ENCODE measurements at regions of chr5 and their contacts with region 1.

Region 1: DNA sequence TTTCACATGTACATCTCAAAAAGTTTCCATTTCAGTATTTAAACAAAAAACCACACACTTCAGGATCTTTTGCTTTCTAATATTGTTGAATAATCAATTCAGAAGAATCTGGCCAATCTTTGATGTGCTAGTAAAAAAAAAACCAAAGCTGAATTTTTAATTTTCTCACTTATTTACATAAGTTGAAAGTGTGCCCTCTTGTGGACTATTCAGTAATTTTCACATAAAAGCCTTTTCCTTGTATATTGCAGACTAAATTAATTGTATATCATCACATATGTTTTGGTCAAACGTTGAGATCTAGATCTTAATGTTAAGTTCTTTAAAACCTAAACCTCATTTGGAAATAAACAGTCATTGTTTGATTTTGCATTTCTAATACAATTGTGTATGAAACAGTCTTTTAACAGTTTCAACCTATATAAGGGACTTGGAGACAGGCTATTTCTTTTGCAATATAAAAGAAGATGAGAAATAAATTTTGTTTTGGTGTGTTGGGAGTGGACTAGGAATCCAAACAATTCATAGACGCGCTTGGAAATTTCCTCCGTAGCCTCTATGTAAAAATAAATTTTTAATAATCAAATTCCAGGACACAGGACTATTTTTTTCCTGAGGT is 68.1 kb downstream of the NIPBL start:
- DNase-seq: peak; percentile 85
- ATAC-seq: no peak
- H3K4me3 ChIP-seq: no peak overlapping the region
- H3K27ac ChIP-seq: no peak overlapping the region
- H3K4me1 ChIP-seq: peaks cover 39% of the 10 kb centered on the region
- H3K27me3 ChIP-seq: no peaks in the 10 kb centered on the region
- CTCF ChIP-seq: peak; percentile 79

Region 2: DNA sequence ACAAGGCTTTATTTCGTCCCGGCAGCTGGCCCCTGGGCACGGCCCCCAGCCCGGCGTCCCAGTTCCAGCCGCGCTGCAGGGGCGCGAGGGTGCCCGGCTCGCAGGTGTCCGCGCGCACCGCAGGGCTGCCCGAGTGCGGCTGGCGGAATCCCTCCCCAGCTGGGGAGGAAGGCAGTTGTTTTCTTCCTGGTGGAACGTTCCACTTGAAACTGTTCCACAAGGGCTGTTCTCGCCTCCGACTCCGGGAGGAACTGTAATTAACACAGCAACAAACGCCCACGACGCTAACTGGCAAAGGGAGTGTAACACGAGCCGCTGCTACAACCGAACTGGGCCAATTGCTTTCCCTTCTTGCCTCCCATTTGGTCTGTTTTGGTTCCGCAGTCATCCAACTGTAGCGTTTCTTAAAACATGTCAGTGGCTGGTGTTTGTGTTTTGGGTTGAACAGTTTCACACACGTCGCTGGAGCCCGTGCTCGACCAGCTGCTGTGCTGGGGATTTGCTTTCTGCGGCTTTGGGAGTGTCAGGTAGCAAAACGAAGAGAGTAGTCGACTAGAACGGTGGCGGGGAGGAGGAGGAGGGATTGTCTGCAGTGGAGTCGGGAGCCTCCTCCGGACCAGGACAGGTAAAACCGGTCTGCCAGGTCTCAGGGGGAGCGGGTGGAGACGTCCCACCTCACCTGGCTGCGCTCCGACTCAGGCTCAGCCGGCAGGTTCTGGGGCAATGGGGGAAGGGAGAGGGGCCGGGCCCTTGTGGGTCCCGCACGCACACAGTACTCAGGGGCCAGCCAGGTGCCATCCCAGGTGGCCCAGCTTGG is 199.7 kb before region 1 on chr5:
- CTCF ChIA-PET with region 1: no interaction called
- POLR2A ChIA-PET with region 1: interaction called, 3 read pairs
- intact Hi-C with region 1: loop called (anchors 2 kb)
- DNase-seq: peak; percentile 94
- ATAC-seq: peak; percentile 62
- H3K4me3 ChIP-seq: peak overlapping the region; percentile 90
- H3K27ac ChIP-seq: peak overlapping the region; percentile 59
- H3K4me1 ChIP-seq: peaks cover 18% of the 10 kb centered on the region
- H3K27me3 ChIP-seq: peaks cover 16% of the 10 kb centered on the region
- CTCF ChIP-seq: peak; percentile 77; the same call in 1 of the 2 replicates

Region 3: DNA sequence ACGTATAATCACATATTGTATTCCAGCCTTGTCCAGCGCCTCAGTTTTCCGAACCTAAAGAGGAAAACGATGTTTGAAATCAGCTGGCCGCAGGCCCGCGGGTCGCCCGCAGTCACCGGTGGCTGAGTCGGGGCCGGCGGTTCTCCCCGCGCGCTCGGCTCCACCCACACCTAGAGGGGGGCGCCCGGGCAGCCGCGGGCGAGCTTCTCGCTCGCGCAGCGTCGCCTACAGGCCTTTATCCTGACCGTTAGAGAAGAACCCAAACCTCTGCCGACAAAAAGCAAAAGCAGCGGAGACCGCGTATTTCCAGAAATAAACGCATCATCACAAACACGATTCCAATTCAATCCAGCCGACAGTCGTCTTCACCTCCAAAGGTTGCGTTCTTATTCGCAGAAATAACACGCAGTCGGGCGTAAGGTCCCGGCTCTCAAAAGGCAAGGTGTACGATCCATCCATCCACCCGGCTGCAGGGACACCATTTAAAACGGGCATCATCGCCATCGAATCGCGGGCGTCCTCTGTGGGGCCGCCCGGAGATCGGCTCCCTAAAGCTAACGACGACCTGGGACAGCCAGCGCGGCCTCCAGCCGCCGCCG is 68.8 kb before region 1 on chr5:
- CTCF ChIA-PET with region 1: no interaction called
- POLR2A ChIA-PET with region 1: no interaction called
- intact Hi-C with region 1: loop called (anchors 1 kb)
- DNase-seq: peak; percentile 81
- ATAC-seq: peak; percentile 67
- H3K4me3 ChIP-seq: peak overlapping the region; percentile 87
- H3K27ac ChIP-seq: peak overlapping the region; percentile 67
- H3K4me1 ChIP-seq: peaks cover 37% of the 10 kb centered on the region
- H3K27me3 ChIP-seq: no peaks in the 10 kb centered on the region
- CTCF ChIP-seq: peak; percentile 60

Region 4: GRCh38 chr5:36928947-36929346 is 15.8 kb before region 1 on chr5:
- CTCF ChIA-PET with region 1: no interaction called
- POLR2A ChIA-PET with region 1: no interaction called
- intact Hi-C with region 1: loop called (anchors 1 kb)
- DNase-seq: peak; percentile 95
- ATAC-seq: peak; percentile 96
- H3K4me3 ChIP-seq: no peak overlapping the region
- H3K27ac ChIP-seq: peak overlapping the region; percentile 80
- H3K4me1 ChIP-seq: peaks cover 47% of the 10 kb centered on the region
- H3K27me3 ChIP-seq: no peaks in the 10 kb centered on the region
- CTCF ChIP-seq: no peak

Region 5: DNA sequence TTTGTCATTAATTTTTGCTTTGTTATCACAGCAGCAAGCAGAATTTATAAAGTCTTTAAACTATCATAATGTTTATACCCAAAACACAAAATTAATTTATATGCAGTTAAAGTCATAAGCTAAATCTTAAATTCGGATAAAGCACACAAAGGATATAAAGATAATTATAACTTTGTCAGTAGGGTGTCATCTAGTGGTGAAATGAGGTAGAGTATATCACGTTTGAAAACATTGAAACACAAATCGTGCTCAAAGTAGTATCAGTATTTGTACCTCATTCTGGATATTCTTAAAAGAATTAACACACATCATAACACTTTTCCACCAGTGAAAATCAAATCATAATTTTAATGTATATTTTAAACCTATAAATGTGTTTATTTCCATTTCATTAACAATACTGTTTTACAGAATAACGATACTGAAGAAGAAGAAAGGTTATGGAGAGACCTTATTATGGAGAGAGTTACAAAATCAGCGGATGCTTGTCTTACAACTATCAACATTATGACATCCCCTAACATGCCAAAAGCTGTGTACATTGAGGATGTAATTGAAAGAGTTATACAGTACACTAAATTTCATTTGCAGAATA is 61.3 kb after region 1 on chr5:
- CTCF ChIA-PET with region 1: interaction called, 3 read pairs
- POLR2A ChIA-PET with region 1: no interaction called
- intact Hi-C with region 1: loop called (anchors 2 kb)
- DNase-seq: peak; percentile 62
- ATAC-seq: peak; percentile 45; the same call in 1 of the 2 replicates
- H3K4me3 ChIP-seq: no peak overlapping the region
- H3K27ac ChIP-seq: no peak overlapping the region
- H3K4me1 ChIP-seq: no peaks in the 10 kb centered on the region
- H3K27me3 ChIP-seq: no peaks in the 10 kb centered on the region
- CTCF ChIP-seq: peak; percentile 84